Vagina (tissue), 2 donors: ENCODE measurements at regions of chr20 and their contacts with region 1.

Region 1: DNA sequence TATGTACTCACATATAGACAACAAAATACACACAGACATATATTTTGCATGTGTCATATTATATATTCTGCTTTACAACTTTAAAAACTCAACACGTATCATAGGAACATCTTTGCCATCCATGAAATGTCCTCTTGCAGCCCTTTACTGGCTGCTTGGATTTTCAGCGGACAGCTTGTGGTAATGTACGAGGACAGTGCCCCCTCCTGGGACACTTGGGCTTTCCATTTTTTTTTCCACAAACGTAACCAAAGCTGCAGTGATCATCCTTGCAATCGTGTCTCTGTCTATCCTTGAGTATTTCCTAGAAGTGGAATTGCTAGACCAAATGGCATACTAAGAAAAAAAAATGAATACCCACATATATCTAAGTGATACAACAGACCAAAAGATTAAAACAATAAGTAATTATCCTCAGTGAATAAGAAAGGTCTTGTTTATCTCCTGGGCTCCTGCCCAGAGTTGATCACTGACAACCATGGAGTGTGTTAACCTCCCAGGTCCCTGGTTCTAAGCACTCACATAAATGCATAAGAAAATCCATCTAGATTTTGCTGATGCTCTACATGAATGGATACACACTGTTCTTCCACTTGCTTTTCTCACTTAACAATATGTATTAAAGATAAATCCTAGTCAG is 18.1 kb downstream of the BPI start:
- DNase-seq: no peak
- H3K4me3 ChIP-seq: no peak overlapping the region
- H3K27ac ChIP-seq: no peak overlapping the region
- H3K4me1 ChIP-seq: no peaks in the 10 kb centered on the region
- H3K27me3 ChIP-seq: no peaks in the 10 kb centered on the region
- CTCF ChIP-seq: peak in 2 of 3 experiments; percentile 62 to 67
- POLR2A ChIP-seq: no peak

Region 2: DNA sequence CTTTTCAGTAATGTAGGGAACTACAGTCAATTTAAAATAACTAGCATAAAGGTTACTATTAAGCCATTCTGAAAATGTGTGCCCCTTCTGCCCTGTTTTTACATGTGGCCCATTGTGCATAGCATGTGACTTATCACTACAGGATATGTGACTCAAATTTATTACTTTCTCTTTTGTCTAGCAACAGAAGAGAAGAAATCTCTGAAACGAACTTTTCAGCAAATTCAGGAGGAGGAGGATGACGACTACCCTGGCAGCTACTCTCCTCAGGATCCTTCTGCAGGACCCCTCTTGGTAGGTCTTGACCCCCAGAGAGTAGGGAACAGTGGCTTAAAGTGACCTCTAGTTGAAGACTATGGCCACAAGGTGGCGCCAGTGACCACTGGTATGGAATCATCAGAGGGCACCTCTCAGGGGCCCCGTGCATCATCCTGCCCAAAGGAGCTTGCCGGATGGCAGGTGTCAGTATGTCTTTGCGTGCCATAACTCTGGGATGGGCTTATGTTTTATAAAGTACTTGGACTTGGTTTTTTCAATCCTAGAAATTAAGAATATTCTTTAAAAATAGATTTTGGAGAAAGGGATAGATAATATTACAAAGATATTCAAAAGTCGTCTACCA is 264.6 kb before region 1 on chr20:
- intact Hi-C with region 1: loop called (anchors 10 kb)
- DNase-seq: peak in 1 of 2 donors; percentile 82
- H3K4me3 ChIP-seq: no peak overlapping the region
- H3K27ac ChIP-seq: no peak overlapping the region
- H3K4me1 ChIP-seq: no peaks in the 10 kb centered on the region
- H3K27me3 ChIP-seq: no peaks in the 10 kb centered on the region
- CTCF ChIP-seq: peak; percentile 76 to 89 (median 88)
- POLR2A ChIP-seq: no peak